Ovary (tissue), 10 donors: ENCODE measurements at regions of chr1 and their contacts with region 1.

Region 1: DNA sequence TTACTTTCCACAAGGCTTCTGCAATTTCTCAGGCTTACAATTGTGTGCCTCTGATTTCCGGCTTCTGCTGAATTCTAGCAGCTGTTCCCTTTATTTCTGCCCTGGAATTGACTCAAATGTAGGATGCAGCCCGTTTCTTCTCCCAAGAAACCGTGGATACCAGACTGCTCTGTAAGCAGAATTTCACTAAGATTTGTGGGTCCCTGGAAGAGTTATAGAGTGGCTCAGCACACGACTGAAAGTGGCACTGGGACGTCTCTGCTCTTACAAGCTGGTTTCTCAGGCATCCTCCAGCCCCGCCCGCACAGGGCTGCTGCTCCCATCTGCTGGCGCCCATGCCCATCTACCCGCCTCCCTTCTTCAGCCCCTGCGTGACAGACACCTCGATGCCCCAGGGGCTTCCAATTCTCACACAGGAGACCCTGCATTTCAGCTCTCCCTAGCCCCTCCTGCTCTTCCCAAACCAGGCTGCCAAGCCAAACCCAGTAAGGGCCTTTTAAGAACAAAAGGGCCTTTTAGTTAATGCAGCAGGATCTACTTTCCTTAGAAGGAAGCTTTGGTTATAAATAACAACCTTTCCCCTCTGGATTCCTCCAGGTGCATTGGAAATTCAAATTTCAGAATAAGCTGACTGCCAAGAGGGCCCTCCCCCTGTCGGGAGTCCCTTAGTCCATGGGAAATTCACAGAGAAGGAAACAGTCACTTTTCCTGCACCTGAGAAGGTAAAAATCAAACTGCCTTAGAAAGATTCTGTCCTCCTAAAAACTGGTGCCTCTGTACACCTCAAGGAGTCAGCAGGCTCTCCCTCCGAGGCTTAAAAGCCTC is 45.4 kb upstream of the TENT5B start:
- DNase-seq: no peak
- H3K4me3 ChIP-seq: no peak overlapping the region
- H3K27ac ChIP-seq: no peak overlapping the region
- H3K4me1 ChIP-seq: no peaks in the 10 kb centered on the region
- H3K27me3 ChIP-seq: no peaks in the 10 kb centered on the region
- CTCF ChIP-seq: no peak
- EP300 ChIP-seq: no peak
- POLR2A ChIP-seq: no peak

Region 2: GRCh38 chr1:26993237-26994019 is 64.6 kb before region 1 on chr1 and contains the start of gene TRNP1:
- intact Hi-C with region 1: no loop called
- DNase-seq: peak in 3 of 5 donors; percentile 43 to 68 (median 60)
- H3K4me3 ChIP-seq: peak within 1 kb of the TSS; percentile 67
- H3K27ac ChIP-seq: no peak within 1 kb of the TSS
- H3K4me1 ChIP-seq: peaks cover 6% of the 10 kb centered on the region
- H3K27me3 ChIP-seq: no peaks in the 10 kb centered on the region
- CTCF ChIP-seq: no peak
- EP300 ChIP-seq: no peak
- POLR2A ChIP-seq: no peak
- total RNA-seq, gene TRNP1: 0.25 to 23.8 (median 2.9) TPM

Region 3: GRCh38 chr1:27004471-27005165 is 53.4 kb before region 1 on chr1:
- intact Hi-C with region 1: loop called in 1 of 4 experiments (anchors 5 kb)
- DNase-seq: peak in 2 of 5 donors; percentile 46 to 62
- H3K4me3 ChIP-seq: no peak overlapping the region
- H3K27ac ChIP-seq: no peak overlapping the region
- H3K4me1 ChIP-seq: peaks cover 8% of the 10 kb centered on the region
- H3K27me3 ChIP-seq: no peaks in the 10 kb centered on the region
- CTCF ChIP-seq: no peak
- EP300 ChIP-seq: no peak
- POLR2A ChIP-seq: no peak